BJ (cell line): ENCODE measurements at regions of chr9 and their contacts with region 1.

Region 1: DNA sequence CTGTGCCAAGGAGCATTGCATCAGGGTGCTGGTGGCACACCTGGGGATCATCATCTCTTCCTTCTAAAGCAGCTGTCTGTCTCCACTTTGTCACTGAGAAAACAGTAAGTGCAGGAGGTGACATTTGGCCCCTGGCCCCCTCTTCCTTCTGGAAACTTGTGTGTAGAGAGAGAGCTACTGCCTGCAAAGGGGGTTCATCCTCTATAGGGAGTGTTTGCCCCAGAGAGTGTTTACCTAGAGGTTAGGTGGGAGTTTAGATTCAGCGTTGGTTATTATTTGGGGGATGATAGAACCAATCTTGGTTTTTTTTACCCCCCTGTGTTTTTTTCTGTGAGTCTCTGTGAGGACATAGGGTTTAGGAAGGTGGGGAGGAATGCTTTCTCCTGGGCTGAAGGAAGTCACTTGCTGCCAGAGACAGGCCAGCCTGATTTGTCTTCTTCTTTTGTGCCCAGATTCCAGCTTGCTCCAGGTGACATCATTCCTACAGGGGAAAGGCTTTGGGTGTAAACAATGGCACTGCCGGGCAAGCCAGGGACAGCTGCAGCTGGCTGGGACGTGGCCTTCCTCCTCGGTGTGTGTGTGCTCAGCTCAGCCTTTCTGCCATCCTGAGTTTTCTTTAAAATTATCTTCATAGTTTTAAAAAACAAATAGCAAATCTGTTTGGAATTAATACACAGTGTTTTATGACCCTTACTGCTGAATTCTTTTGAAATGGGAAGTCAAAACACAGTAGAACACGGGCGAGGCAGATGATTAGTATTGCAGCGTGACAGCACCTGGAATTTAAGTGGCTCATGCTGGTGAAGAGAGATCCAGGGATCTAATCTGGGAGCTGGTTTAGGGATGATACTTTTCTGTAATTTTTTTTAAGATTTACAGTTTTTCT is 24.5 kb downstream of the PRRC2B start:
- DNase-seq: no peak
- H3K4me3 ChIP-seq: no peak overlapping the region
- H3K27me3 ChIP-seq: no peaks in the 10 kb centered on the region
- CTCF ChIP-seq: no peak

Region 2: DNA sequence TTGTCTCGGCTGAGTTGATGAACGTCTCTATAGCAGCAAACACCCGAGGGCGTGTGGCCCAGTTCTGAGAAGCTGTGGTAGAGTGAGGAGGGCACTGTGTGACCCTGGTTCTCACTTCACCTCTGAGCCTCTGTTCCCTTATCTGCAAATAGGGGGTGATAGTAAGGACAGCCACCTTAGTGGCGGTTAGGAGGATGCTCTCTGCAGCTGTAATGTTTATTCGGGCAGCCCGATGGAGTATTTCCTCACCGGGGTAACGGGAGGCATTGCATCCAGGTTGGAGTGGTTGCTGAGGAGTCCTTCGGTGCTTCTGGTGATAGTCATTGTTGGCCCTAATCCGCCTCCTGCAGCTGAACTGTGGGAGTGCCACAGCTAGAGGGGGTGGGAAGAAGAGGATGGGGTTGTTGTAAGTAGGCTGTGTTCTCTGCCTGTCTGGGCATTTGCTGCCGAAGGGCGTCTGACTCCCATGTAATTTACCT is 10.6 kb before region 1 on chr9:
- CTCF ChIA-PET with region 1: interaction called, 18 read pairs
- POLR2A ChIA-PET with region 1: interaction called, 3 read pairs
- DNase-seq: no peak
- H3K4me3 ChIP-seq: no peak overlapping the region
- H3K27me3 ChIP-seq: no peaks in the 10 kb centered on the region
- CTCF ChIP-seq: peak; percentile 38

Region 3: DNA sequence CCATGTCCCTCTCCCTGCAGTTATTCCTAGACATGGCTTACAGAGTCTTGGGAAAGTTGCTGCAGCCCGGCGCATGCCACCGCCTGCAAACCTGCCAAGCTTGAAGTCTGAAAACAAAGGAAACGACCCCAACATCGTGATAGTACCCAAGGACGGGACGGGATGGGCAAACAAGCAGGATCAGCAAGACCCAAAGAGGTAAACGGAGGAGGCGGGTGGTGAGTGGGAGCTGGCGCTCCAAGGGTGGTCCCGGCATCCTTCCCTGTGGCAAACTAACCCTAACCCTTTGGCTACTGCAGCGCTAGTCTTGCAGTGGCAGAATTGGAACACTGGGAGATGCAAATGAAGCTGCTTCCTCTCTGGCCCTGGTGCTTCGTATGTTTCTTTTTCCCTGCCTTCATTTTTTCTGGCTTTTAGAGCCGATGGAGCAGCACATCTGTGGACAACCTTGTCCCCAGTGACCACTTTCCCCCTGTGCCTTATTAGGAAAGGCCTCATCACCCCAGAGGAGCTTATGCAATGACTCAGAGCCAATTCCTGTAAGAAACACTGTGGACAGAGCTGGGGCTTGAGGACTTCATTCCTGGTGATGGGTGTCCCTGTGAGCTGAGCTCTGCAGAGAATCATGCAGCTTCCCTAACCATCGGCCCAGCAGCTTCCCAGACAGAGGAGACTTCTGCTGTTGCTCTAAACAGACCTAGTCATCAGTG is 14.4 kb after region 1 on chr9:
- CTCF ChIA-PET with region 1: interaction called, 11 read pairs
- POLR2A ChIA-PET with region 1: no interaction called
- DNase-seq: peak; percentile 79
- H3K4me3 ChIP-seq: no peak overlapping the region
- H3K27me3 ChIP-seq: no peaks in the 10 kb centered on the region
- CTCF ChIP-seq: 0 out of 2 replicates have a peak, but pooled peaks have one; percentile 9